ENCODE measurements at regions of chr15 and their contacts with region 1.

Region 1: DNA sequence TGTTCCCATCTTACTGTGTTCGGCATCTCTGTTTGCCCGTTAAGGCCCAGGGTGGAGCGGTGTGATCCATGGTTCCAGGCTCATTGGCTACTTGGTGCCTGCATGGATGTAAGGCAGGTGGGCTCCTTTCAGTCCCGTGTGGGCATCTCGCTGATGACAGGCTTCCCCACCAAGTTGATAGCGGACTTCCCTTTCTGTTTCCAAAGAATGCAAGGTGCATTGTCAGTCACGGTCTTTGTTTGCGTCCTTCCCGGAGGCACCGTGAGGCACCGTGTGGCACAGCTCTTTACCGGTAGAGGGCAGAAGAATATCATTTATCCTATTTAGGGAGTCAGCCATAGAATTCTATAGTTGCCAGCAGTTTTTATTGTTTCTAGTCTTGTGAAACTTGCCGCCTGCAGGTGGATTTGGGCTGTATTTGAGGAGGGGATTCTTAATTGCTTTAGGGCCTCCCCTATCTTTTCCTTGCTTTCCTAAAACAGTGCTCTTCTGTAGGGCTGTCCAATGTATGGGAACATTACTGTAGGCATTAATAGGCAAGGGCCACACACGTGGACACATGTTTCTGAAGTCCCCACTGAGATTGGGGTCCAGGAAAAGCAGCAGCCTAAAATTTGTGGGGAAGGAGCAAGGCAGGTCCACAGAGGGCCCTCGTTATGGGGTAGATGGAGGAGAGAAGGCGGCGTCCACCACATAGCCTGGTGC is 244.1 kb downstream of the SLCO3A1 start:
- DNase-seq: peak; percentile 23
- H3K4me3 ChIP-seq: no peak overlapping the region
- H3K27ac ChIP-seq: no peak overlapping the region
- H3K4me1 ChIP-seq: no peaks in the 10 kb centered on the region
- H3K27me3 ChIP-seq: no peaks in the 10 kb centered on the region
- CTCF ChIP-seq: peak; percentile 80 to 81

Region 2: DNA sequence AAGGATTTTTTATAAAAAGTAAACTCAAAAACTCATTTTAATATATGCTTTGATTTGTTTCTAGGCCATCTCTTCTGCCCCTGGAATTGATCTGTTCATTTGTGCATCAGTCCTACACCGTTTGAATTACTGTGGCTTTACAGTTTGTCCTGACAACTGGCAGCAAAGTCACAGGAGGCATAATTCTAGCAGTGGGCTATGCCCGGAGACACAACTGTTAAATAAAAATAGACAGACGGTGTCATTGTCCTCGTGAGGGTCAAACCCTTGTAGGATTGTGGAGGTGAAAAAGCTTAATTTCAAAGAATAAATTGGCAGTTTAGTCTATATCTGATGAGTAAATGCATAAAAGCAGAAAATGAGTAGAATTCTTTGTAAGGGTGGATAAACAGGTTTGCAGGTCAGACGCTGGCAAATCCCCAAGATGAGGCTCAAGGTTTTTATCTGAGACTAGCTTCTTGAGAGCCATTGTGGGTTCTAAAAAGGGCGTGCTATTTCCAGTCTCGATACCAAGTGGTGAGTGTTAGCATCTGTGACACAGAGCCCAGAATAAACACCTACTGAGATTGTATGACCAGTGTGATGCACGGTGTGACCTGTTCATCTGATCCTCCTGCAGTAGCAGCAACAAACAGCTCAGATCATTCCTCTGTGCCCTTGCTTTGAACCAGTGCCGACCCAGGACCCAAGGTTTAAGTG is 295.6 kb before region 1 on chr15:
- CTCF ChIA-PET with region 1: no interaction called
- dilution Hi-C with region 1: no loop called
- in situ Hi-C with region 1: no loop called
- intact Hi-C with region 1: no loop called
- DNase-seq: peak; percentile 17
- H3K4me3 ChIP-seq: no peak overlapping the region
- H3K27ac ChIP-seq: no peak overlapping the region
- H3K4me1 ChIP-seq: no peaks in the 10 kb centered on the region
- H3K27me3 ChIP-seq: peaks cover 4% of the 10 kb centered on the region
- CTCF ChIP-seq: no peak

Region 3: GRCh38 chr15:92158434-92158833 is 60.8 kb after region 1 on chr15:
- CTCF ChIA-PET with region 1: no interaction called
- dilution Hi-C with region 1: no loop called
- in situ Hi-C with region 1: no loop called
- intact Hi-C with region 1: no loop called
- DNase-seq: peak; percentile 88
- H3K4me3 ChIP-seq: no peak overlapping the region
- H3K27ac ChIP-seq: peak overlapping the region; percentile 46
- H3K4me1 ChIP-seq: peaks cover 15% of the 10 kb centered on the region
- H3K27me3 ChIP-seq: no peaks in the 10 kb centered on the region
- CTCF ChIP-seq: no peak

Region 4: GRCh38 chr15:92217896-92218295 is 120.3 kb after region 1 on chr15:
- CTCF ChIA-PET with region 1: no interaction called
- dilution Hi-C with region 1: no loop called
- in situ Hi-C with region 1: loop called (anchors 10 to 25 kb)
- intact Hi-C with region 1: no loop called
- DNase-seq: no peak
- H3K4me3 ChIP-seq: no peak overlapping the region
- H3K27ac ChIP-seq: no peak overlapping the region
- H3K4me1 ChIP-seq: no peaks in the 10 kb centered on the region
- H3K27me3 ChIP-seq: no peaks in the 10 kb centered on the region
- CTCF ChIP-seq: no peak

Region 5: GRCh38 chr15:92277776-92278175 is 180.2 kb after region 1 on chr15:
- CTCF ChIA-PET with region 1: no interaction called
- dilution Hi-C with region 1: no loop called
- in situ Hi-C with region 1: no loop called
- intact Hi-C with region 1: loop called (anchors 1 kb)
- DNase-seq: peak; percentile 37
- H3K4me3 ChIP-seq: no peak overlapping the region
- H3K27ac ChIP-seq: no peak overlapping the region
- H3K4me1 ChIP-seq: no peaks in the 10 kb centered on the region
- H3K27me3 ChIP-seq: no peaks in the 10 kb centered on the region
- CTCF ChIP-seq: peak; percentile 33 to 60

Region 6: DNA sequence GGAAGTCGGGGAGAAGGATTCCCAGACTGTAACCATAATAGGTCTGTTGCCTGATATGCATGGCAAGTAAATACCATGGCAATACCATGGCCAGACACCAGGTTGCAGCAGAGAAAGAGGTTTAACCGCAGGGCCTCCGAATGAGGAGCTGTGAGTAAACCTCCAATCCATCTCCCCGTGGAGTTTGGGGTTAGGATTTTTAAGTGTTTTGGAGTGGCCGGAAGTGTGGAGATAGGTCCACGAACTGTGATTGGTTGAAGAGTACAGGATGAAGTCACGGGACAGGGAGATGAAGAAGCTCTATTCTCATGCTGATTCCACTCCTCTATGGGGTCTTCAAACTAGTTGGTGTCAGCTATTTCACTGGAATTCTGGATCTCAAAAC is 424.0 kb after region 1 on chr15:
- CTCF ChIA-PET with region 1: no interaction called
- dilution Hi-C with region 1: no loop called
- in situ Hi-C with region 1: no loop called
- intact Hi-C with region 1: loop called (anchors 1 kb)
- DNase-seq: peak; percentile 62
- H3K4me3 ChIP-seq: no peak overlapping the region
- H3K27ac ChIP-seq: no peak overlapping the region
- H3K4me1 ChIP-seq: no peaks in the 10 kb centered on the region
- H3K27me3 ChIP-seq: no peaks in the 10 kb centered on the region
- CTCF ChIP-seq: peak; percentile 70 to 80